PC-3 (cell line): ENCODE measurements at regions of chr18 and their contacts with region 1.

Region 1: DNA sequence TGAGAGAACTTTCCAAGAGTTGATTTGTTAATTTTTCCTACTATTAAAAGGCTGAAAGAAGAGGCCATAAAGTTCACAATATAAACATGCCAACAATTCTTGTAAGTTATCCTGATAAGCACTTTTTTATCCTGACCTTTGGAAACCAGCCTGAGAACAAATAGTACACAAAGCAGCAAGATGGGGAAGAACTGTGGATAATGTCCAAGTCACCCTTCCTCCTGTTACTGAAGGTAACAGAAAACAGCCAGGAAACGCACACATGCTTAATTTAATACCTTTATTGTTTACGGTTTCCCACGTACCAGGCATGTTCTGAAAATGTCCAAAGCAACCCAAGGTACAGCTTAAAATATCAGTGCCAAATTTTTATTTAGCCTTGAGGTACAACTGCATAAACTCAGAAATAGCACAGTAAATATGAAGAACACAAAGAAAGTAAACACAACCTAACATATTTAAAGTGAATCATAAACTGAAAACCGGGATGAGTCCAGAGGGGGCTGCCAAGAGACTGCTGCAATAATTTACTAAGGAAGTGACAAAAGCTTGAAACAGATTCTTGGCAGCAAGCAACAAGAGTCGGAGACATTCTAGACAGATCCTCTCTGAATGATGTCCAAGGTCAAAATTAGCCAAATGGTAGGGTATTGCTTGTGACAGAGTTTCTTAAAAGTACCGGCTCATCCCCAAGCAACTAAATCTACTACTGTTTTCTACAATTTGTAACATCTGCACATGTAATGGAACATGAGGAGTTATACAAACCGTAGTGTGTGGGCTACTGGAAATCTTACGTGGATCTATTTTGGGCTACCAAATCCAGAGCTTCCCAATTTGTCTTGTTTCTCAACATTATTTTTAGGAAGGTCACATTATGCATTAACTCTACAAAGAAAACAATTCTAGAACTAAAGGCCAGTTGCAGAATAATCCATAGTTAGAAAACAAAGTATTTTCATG is 93.2 kb downstream of the CABYR start:
- DNase-seq: peak; percentile 86
- ATAC-seq: peak; percentile 74
- H3K4me3 ChIP-seq: peak overlapping the region; percentile 6; the same call in 1 of the 2 replicates
- H3K27ac ChIP-seq: peak overlapping the region; percentile 84
- H3K4me1 ChIP-seq: peaks cover 53% of the 10 kb centered on the region
- H3K27me3 ChIP-seq: no peaks in the 10 kb centered on the region
- CTCF ChIP-seq: no peak

Region 2: DNA sequence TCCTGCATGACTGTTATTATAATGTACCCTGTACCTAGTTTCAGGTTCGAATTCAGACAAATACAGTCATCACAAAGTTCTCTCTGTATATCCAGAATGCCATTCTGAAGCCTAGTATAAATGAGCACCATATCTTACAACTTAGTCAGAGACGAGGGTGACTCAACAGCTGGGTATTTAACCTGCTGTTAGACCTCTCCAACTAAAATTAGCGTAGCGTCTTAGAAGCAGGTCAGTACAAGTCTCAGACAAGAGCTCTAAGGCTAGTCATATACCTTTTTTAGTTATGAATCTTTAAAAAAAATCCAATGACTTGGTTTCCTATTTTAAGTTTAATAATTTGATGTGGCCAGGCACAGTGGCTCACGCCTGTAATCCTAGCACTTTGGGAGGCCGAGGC is 19.1 kb before region 1 on chr18:
- CTCF ChIA-PET with region 1: no interaction called
- POLR2A ChIA-PET with region 1: no interaction called
- intact Hi-C with region 1: loop called (anchors 1 kb)
- DNase-seq: peak; percentile 97
- ATAC-seq: peak; percentile 87
- H3K4me3 ChIP-seq: no peak overlapping the region
- H3K27ac ChIP-seq: peak overlapping the region; percentile 30
- H3K4me1 ChIP-seq: peaks cover 78% of the 10 kb centered on the region
- H3K27me3 ChIP-seq: no peaks in the 10 kb centered on the region
- CTCF ChIP-seq: no peak